ENCODE measurements at regions of chr15 and their contacts with region 1.

Region 1: DNA sequence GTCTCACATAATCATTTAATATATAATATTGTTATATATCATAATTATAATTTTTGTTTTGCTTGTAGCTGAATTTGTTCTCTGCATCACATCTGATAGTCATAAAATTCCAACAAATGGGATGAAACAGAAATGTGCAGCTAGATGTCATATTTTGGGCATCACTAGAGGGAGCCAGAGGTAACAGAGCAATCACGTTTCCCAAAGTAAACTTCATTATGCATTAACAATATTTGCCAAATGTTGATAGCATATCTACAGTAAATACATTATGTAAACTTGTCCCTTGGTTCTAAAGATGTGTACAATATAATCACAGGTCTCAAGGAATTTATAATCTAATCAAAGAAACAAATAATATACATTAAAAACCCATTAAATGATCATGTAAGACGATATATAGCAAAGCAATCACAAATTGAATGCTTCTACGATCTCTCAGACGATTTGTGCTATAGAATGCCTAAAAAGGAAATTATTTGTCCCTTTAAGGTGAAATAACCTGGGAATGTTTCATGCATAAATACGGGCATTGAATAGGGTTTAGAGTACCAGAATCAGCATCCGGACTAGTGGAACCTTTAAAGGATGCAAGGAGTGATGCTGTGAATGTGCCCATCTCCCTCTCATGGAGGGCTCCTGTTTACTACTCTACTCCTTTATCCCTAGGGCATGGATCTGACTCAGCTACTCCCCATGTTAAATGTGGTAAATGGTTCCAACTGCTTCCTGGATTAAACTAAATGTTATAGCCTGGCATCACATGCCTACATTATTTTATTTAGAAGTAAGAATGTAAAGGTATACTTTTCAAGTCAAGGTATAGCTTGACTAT is 234.1 kb upstream of the MCTP2 start:
- DNase-seq: no peak
- ATAC-seq: no peak

Region 2: GRCh38 chr15:93649691-93650235 is 347.5 kb before region 1 on chr15:
- intact Hi-C with region 1: loop called (anchors 5 kb)
- DNase-seq: no peak
- ATAC-seq: peak; percentile 52

Region 3: DNA sequence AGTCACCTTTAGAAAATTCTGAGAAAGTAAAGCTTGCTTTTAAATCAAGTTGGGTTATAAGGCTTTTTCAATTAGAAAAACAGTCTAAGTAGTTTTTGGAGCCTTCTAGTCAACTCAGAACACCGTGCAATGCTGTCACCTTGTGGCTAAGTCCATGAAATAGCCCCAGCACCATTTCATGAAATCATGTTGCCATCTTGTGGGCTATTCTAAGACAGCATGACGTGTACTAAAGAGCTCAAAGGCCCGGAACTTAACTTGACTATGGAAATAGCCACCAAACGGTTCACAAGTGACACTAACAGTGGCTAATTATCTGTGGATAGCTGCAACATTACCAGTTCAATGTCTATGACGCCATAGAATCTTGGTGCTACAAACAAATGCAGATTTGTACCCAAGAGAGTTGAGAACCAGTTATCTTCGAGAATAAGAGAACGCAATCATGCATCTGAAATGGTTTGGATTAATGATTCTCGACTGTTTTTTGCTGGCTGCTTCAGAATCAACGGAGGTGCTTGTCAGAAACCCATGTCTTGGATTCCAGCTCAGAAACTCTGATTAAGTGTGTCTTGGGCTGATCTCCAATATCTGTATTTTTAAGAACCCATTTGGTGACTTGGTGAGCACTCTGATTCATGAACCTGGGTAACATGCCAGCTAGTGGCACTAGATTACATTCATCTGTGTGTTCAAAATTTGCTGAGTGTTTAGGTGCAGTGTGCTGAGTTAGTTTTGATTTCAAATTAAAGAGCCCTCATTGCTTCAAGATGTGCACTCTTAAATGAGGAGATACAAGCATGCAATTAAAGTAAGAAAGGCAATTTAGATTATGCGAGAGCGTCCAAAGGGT is 122.8 kb after region 1 on chr15:
- intact Hi-C with region 1: loop called (anchors 5 kb)
- DNase-seq: no peak
- ATAC-seq: peak; percentile 96

Measured in Right ventricle myocardium inferior (tissue), 1 donor.